AG04450 (cell line): ENCODE measurements at regions of chrX and their contacts with region 1.

Region 1: DNA sequence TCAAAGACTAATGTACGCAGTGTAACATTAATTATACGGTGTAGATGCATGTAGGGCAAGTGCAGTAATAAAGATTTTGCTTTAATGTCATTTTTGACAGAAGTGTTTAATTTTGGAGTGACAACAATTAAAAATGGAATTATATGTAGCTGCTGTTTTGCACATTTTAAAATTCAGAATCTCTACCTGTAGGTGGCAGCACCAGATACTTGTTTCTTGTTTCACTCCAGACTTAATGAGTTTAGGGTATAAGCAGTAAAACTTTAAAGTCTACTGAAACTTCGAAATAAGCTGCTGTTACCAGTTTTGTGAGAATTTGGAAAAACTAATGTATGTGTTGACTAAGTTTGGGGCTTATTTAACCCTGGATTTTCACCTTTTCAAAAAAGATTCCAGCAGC is 144.9 kb downstream of the POLA1 start:
- DNase-seq: no peak
- H3K4me3 ChIP-seq: no peak overlapping the region
- H3K27ac ChIP-seq: no peak overlapping the region
- H3K27me3 ChIP-seq: no peaks in the 10 kb centered on the region
- CTCF ChIP-seq: peak; percentile 46

Region 2: DNA sequence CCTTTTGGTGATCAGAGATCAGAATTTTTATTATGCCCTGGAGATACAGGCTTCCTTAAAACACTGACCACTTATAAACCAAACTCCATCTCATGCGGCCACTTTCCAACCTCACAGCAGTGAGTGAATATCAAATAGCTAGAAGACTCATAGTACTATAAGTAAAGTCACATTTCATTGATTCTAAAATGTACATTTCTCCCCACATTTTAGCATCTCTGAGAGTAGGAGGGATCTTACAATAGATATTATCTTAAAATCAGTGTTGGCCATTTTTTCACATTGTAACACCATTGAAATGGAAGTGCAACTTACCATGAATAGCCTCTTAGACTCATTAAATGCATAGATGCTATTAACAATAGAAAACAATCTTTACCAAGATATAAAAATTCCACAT is 208.9 kb before region 1 on chrX:
- CTCF ChIA-PET with region 1: no interaction called
- POLR2A ChIA-PET with region 1: no interaction called
- DNase-seq: no peak
- H3K4me3 ChIP-seq: no peak overlapping the region
- H3K27ac ChIP-seq: no peak overlapping the region
- H3K27me3 ChIP-seq: no peaks in the 10 kb centered on the region
- CTCF ChIP-seq: no peak

Region 3: DNA sequence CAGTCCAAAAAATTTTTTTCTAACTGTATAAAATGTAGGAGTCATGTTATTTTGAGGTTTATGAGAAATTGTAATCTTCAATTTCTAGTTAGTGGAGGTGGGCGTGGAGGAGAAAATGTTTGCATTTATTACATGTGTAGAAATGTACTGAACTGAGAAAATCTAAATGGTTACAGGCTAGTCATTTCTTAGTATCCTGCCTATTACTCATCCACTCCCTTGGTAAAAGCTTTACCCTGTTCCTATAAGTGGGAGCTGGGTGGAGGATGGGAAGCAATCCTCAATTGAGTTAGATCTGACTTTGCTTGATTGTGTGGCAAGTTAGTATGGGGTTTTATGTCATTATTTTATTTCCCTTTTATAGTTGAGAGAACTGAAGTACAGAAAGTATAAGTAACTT is 71.1 kb before region 1 on chrX:
- CTCF ChIA-PET with region 1: interaction called, 10 read pairs
- POLR2A ChIA-PET with region 1: no interaction called
- DNase-seq: no peak
- H3K4me3 ChIP-seq: no peak overlapping the region
- H3K27ac ChIP-seq: no peak overlapping the region
- H3K27me3 ChIP-seq: no peaks in the 10 kb centered on the region
- CTCF ChIP-seq: no peak

Region 4: GRCh38 chrX:24858004-24858746 is 19.5 kb after region 1 on chrX:
- CTCF ChIA-PET with region 1: interaction called, 14 read pairs
- POLR2A ChIA-PET with region 1: no interaction called
- DNase-seq: no peak
- H3K4me3 ChIP-seq: no peak overlapping the region
- H3K27ac ChIP-seq: no peak overlapping the region
- H3K27me3 ChIP-seq: no peaks in the 10 kb centered on the region
- CTCF ChIP-seq: no peak

Region 5: GRCh38 chrX:25020905-25021449 is 182.3 kb after region 1 on chrX:
- CTCF ChIA-PET with region 1: interaction called, 41 read pairs
- POLR2A ChIA-PET with region 1: no interaction called
- DNase-seq: no peak
- H3K4me3 ChIP-seq: no peak overlapping the region
- H3K27ac ChIP-seq: no peak overlapping the region
- H3K27me3 ChIP-seq: peaks cover 80% of the 10 kb centered on the region
- CTCF ChIP-seq: peak; percentile 45